ENCODE measurements at regions of chr7 and their contacts with region 1.

Region 1: DNA sequence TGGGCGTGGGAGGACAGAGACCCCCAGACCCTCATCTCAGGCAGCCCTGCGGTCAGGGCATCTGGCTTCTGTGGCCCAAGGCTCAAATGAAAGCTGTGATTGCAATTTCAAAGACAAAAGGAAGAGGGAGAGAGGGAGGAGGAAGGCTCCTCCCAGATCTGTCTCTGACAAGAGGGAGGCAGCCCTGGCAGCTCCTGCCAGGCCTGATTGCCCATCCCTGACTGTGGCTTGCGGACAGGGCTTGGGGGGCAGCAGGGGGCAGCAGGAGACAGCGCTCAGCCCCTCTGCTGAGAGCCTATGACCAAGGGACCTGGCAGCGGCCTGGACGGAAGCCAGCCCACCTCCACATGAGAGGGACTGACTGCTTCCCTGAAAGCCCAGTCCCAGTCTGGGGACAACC is 91.8 kb downstream of the PTPRN2 start:
- DNase-seq: peak; percentile 49
- H3K4me3 Mint-ChIP-seq: no peak overlapping the region
- H3K27ac Mint-ChIP-seq: no peak overlapping the region
- H3K4me1 Mint-ChIP-seq: no peaks in the 10 kb centered on the region
- H3K27me3 Mint-ChIP-seq: peaks cover 24% of the 10 kb centered on the region
- CTCF ChIP-seq: peak; percentile 18

Region 2: GRCh38 chr7:158407581-158408317 is 88.0 kb before region 1 on chr7:
- CTCF ChIA-PET with region 1: no interaction called
- POLR2A ChIA-PET with region 1: no interaction called
- intact Hi-C with region 1: no loop called
- DNase-seq: peak; percentile 78
- H3K4me3 Mint-ChIP-seq: no peak overlapping the region
- H3K27ac Mint-ChIP-seq: no peak overlapping the region
- H3K4me1 Mint-ChIP-seq: peaks cover 16% of the 10 kb centered on the region
- H3K27me3 Mint-ChIP-seq: no peaks in the 10 kb centered on the region
- CTCF ChIP-seq: peak; percentile 56

Region 3: DNA sequence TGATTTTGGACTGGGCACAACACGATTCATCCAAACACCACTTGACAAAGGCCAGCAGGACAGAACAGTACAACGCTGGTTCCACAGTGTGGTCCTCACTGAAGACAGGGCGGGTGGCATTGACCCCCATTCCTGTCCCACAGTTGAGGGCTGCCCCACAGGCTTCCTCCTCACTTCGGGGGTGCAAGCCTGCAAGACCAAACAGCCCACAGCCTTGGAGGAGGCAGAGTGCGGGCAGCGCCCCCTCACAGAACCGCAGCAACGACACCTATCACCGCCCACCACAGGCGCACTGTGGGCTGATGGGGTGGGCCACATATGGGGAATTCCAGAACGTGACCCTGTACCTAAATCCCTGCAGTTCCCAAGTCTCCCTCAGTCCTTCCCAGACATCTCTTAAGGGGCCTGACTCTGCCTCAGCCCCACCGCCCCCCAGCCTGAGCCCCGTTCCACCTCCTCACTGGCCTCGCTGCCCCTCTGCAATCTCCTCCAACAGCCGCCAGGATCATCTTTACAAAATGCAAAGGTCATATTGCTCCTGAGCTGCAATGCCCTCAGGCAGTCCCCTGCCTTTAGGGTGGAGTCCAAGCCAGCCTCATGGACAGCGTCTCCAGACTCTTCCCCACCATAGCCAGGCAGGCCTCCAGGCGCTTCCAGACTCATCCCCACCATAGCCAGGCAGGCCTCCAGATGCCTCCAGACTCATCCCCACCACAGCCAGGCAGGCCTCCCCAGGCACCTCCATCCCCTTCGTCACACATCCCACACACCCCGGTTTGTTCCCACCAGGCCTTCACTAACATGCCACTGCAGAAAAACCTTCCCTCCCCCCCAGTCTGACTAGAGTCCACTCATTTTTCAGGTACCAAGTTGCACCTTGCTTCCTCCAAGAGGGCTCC is 21.5 kb after region 1 on chr7:
- CTCF ChIA-PET with region 1: no interaction called
- POLR2A ChIA-PET with region 1: no interaction called
- intact Hi-C with region 1: no loop called
- DNase-seq: no peak
- H3K4me3 Mint-ChIP-seq: no peak overlapping the region
- H3K27ac Mint-ChIP-seq: no peak overlapping the region
- H3K4me1 Mint-ChIP-seq: no peaks in the 10 kb centered on the region
- H3K27me3 Mint-ChIP-seq: peaks cover 47% of the 10 kb centered on the region
- CTCF ChIP-seq: no peak

Region 4: DNA sequence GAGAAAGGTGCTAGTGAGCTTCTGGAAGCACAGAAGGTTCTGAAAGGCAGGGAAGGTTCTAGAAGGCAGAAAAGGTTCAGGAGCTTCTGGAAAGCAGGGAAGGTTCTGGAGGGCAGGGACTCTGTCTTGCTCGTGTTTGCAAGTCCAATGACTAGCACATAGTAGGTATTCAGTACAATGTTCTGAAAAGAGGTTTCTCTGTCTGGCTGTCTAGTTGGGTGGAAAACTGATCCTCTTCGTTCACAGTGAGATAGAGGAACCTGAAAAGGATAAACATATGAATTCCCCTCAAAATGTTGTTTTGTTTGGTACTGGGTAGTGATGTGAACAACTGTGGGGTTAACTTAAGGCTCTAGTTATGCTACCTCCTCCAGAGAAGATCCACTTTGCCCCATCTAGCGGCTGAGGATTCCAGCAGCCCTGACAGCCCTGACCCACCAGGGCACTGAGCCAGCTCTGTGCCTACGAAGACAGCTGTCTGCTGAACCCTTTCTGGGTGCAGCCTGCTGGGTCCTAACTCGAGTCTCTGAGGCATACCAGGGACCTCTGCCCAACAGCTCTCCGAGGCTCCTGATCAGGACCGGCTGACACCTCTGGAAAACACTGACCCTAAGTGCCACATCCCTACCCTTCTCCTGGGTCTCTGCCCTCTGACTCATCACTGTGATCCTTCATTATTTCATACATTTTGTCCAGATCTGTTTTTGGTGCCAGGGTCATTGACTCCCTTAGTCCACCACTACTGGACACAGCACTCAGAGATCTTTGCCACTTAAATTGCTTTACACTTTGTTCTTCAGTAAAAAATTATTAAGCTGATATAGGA is 76.4 kb after region 1 on chr7:
- CTCF ChIA-PET with region 1: no interaction called
- POLR2A ChIA-PET with region 1: no interaction called
- intact Hi-C with region 1: loop called (anchors 1 kb)
- DNase-seq: peak; percentile 51
- H3K4me3 Mint-ChIP-seq: no peak overlapping the region
- H3K27ac Mint-ChIP-seq: no peak overlapping the region
- H3K4me1 Mint-ChIP-seq: peaks cover 12% of the 10 kb centered on the region
- H3K27me3 Mint-ChIP-seq: no peaks in the 10 kb centered on the region
- CTCF ChIP-seq: peak; percentile 13